ENCODE measurements at regions of chr15 and their contacts with region 1.

Region 1: DNA sequence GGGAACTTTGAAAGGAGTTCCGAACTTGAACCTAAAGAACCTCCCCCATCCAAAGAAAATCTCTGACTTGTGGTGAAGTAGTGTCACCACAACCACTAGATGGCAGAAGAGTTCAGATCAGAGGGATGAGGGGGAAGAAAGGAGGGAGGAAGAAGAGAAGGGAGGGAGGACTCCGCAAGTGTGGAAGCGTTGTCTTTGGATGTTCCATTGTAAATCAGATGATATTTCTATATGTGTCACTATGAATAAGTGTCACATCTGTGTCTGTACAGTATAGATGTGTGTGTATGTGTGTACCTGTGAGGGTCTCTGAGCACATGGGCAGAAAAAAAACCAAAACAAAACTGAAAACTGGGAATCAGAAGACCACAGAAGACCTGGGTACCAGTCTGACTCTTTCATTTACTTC is 16.9 kb downstream of the SLC24A1 start:
- DNase-seq: peak; percentile 74
- H3K4me3 ChIP-seq: no peak overlapping the region
- H3K27ac ChIP-seq: no peak overlapping the region
- H3K4me1 ChIP-seq: peaks cover 20% of the 10 kb centered on the region
- H3K27me3 ChIP-seq: no peaks in the 10 kb centered on the region
- CTCF ChIP-seq: peak; percentile 72
- POLR2A ChIP-seq: no peak

Region 2: DNA sequence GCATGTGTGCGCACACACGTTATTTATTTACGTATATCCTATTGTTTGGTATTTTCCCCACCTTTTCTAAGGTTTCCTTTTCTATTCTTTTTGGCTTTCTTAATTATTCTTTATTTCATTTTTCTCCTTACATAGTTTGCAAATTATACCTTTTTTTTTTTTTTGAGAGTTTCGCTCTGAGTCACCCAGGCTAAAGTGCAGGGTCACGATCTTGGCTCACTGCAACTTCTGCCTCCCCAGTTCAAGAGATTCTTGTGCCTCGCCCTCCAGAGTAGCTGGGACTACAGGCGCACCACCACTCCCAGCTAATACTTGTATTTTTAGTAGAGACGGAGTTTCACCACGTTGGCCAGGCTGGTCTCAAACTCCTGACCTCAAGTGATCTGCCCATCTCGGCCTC is 407.4 kb before region 1 on chr15:
- CTCF ChIA-PET with region 1: no interaction called
- POLR2A ChIA-PET with region 1: no interaction called
- dilution Hi-C with region 1: no loop called
- intact Hi-C with region 1: no loop called
- DNase-seq: no peak
- H3K4me3 ChIP-seq: no peak overlapping the region
- H3K27ac ChIP-seq: no peak overlapping the region
- H3K4me1 ChIP-seq: no peaks in the 10 kb centered on the region
- H3K27me3 ChIP-seq: no peaks in the 10 kb centered on the region
- CTCF ChIP-seq: no peak
- POLR2A ChIP-seq: no peak

Region 3: GRCh38 chr15:65939901-65940617 is 301.4 kb after region 1 on chr15:
- CTCF ChIA-PET with region 1: no interaction called
- POLR2A ChIA-PET with region 1: no interaction called
- dilution Hi-C with region 1: no loop called
- intact Hi-C with region 1: loop called (anchors 10 kb)
- DNase-seq: peak; percentile 76
- H3K4me3 ChIP-seq: no peak overlapping the region
- H3K27ac ChIP-seq: no peak overlapping the region
- H3K4me1 ChIP-seq: peaks cover 16% of the 10 kb centered on the region
- H3K27me3 ChIP-seq: no peaks in the 10 kb centered on the region
- CTCF ChIP-seq: no peak
- POLR2A ChIP-seq: no peak